Uterus (tissue), 4 donors: ENCODE measurements at regions of chr6 and their contacts with region 1.

Region 1: DNA sequence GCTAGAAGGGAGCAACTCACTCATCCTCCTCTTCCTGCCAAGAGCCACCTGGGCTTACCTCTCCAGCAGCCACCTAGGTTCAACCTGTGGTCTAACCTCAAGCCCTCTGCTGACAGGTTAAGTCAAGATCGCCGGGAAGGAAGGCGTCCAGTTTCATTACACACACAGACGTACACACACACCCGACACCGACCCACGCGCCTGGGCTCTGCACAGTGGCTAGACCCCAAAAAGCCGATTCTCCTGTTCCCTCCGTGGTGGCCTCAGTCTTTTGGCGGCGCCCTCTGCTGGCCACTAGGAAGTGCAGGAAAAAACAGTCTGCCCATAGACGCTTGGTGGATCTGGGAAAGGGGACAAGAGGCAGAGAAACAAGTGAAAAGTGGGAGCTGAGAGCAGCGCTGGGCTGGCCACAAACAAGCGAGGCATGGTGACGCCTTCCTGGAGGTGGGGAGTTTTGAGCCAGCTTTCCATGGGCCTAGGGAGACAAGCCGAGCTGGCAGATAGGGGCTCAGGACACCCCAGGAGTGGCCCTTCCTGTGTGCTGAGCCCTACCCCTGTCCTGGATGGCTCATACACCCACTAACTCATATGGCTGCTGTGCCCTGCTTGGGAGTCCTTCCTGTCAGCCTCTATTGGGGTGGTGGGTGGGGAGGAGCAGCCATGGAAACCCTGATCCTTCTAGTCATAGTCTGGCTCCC is 52.7 kb downstream of the MRPL14 start:
- DNase-seq: peak; percentile 76 to 81
- H3K4me3 ChIP-seq: no peak overlapping the region
- H3K27ac ChIP-seq: peak overlapping the region; percentile 81 to 92
- H3K4me1 ChIP-seq: peaks cover 14 to 16% of the 10 kb centered on the region in 2 donors
- H3K27me3 ChIP-seq: no peaks in the 10 kb centered on the region
- CTCF ChIP-seq: peak; percentile 84 to 90 (median 87)
- POLR2A ChIP-seq: no peak

Region 2: GRCh38 chr6:43667245-43668150 is 407.1 kb before region 1 on chr6:
- intact Hi-C with region 1: loop called (anchors 2 kb)
- DNase-seq: peak; percentile 83 to 89
- H3K4me3 ChIP-seq: no peak overlapping the region
- H3K27ac ChIP-seq: peak overlapping the region; percentile 75 to 81
- H3K4me1 ChIP-seq: peaks cover 21 to 33% of the 10 kb centered on the region in 2 donors
- H3K27me3 ChIP-seq: no peaks in the 10 kb centered on the region
- CTCF ChIP-seq: peak; percentile 95 to 97 (median 97)
- POLR2A ChIP-seq: no peak

Region 3: GRCh38 chr6:44127186-44128019 is 52.8 kb after region 1 on chr6 and contains the starts of genes MRPL14 and TMEM63B:
- intact Hi-C with region 1: no loop called
- DNase-seq: peak; percentile 80 to 91
- H3K4me3 ChIP-seq: peak within 1 kb of the TSS; percentile 83 to 88
- H3K27ac ChIP-seq: peak within 1 kb of the TSS; percentile 94 to 96
- H3K4me1 ChIP-seq: peaks cover 0 to 7% of the 10 kb centered on the region in 2 donors
- H3K27me3 ChIP-seq: no peaks in the 10 kb centered on the region
- CTCF ChIP-seq: no peak
- POLR2A ChIP-seq: peak; percentile 76 to 82
- total RNA-seq, gene MRPL14: 19.5 to 39.1 (median 33.6) TPM
- total RNA-seq, gene TMEM63B: 0.77 to 24.9 (median 15.4) TPM